GM18951 (cell line): ENCODE measurements at regions of chr2 and their contacts with region 1.

Region 1: DNA sequence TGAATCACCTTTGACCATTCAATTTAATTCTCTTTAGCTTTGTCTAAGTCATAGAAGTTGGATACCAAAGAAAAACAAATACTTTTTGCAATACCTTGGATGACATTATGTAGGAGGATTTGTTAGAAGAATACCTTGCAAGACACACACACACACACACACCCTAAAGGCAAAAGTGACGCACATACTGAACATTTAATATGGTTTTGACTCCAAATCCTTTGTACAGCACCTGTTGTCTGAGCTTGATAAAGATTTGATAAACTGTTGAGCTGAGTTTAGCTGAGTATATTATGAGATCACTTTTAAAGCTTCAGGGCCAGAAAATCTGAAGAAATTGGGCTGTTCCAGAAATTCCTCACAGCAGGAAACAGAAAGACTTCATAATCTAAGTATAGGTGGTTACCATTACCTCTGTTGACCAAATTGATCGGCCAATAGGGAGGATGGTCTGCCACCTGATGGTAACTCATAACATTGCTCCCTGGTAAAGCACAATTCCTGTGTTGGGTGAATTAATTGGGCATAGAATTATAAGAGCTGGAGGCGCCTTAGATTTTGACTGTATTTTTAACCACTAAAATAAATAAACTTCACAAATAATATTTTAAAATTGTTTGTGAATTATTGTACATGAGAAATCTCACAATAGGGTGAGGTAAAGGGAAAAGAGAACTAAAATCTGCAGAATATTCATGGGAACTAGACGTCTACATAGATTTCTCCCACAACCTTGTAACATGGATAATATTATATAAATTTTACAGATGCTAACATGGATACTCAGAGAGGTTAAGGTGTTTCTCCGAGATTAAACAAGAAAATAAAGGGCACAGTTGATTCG is 21.9 kb upstream of the RPIA start:
- POLR2A ChIP-seq: no peak

Region 2: DNA sequence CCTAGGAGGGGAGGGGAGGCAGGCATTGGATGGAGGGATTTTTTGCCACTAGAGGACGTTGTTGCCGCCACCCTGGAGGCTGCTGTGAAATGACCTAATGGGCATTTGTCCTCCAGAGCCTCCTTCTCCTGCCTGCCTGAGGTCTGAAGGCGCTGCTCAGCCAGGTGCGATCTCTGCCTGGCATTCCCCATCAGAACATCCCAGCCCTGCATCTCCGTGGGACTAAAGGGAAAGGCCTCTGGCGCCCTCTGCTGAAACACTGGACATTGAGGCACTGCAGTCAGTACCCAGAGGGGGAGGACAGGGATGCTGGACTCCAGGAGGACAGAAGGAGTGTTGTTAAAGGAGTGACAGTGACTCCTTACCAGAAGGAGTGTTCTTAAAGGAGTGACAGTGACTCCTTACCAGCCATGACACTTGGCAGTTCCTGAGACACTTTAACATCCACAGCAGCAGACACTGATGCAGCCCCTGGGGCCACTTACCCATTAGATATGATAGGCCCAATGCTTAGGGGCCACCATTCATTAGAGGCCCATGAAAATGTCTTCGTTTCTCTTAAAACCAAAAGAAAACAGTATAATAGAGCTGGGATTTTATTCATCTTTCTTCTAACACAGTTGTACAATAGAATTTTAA is 482.4 kb before region 1 on chr2:
- in situ Hi-C with region 1: loop called (anchors 25 kb)
- POLR2A ChIP-seq: no peak

Region 3: GRCh38 chr2:88590998-88591613 is 78.5 kb before region 1 on chr2:
- in situ Hi-C with region 1: loop called (anchors 5 kb)
- POLR2A ChIP-seq: no peak

Region 4: GRCh38 chr2:88810017-88810416 is 140.4 kb after region 1 on chr2:
- in situ Hi-C with region 1: no loop called
- POLR2A ChIP-seq: no peak

Region 5: DNA sequence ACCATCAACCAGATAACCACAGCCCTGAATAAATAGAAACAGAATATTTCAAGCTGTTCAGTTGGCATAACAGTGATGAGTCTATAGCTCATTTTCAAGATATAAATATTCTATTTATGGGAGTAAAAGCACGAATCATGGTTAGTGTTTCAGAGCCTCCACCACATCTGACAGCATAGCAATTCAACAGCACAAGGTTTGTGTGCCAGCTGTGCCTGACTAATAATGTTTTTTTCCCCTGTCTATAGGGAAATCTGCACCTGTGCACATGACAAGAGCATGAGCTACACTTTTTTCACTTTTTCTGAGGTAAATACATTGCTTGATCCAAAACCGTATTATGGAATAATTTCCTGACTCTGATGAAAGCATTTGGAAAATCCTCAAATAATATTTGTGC is 273.2 kb after region 1 on chr2:
- in situ Hi-C with region 1: no loop called
- POLR2A ChIP-seq: no peak